ENCODE measurements at regions of chr20 and their contacts with region 1.

Region 1: DNA sequence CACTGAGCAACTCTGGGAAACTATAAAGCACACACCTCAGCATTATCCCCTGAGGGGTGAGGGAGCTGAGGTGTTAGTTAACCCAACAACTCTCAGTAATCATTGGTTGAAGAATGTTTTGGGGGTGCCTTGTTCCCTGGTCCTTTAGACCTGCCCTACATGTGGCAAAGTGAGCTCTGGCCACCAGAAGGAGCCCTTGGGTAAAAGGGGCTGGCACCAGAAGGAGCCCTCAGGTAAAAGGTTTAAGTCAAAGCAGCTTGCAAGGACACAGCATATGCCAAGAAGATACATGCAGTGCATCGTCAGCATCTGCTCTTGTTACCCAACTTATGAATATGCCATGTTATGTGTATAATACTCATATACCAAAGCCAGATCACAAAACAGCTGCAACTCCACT is 1081.7 kb downstream of the KIF16B start:
- DNase-seq: peak; percentile 13
- ATAC-seq: no peak
- H3K4me3 ChIP-seq: no peak overlapping the region
- H3K4me3 Mint-ChIP-seq: no peak overlapping the region
- H3K27ac ChIP-seq: no peak overlapping the region
- H3K27ac Mint-ChIP-seq: no peak overlapping the region
- H3K4me1 ChIP-seq: no peaks in the 10 kb centered on the region
- H3K4me1 Mint-ChIP-seq: no peaks in the 10 kb centered on the region
- H3K27me3 ChIP-seq: no peaks in the 10 kb centered on the region
- H3K27me3 Mint-ChIP-seq: no peaks in the 10 kb centered on the region
- CTCF ChIP-seq: peak; percentile 13

Region 2: GRCh38 chr20:15930311-15931305 is 439.0 kb after region 1 on chr20:
- CTCF ChIA-PET with region 1: no interaction called
- POLR2A ChIA-PET with region 1: no interaction called
- intact Hi-C with region 1: loop called (anchors 10 kb)
- DNase-seq: peak; percentile 44
- ATAC-seq: peak; percentile 61
- H3K4me3 ChIP-seq: no peak overlapping the region
- H3K4me3 Mint-ChIP-seq: no peak overlapping the region
- H3K27ac ChIP-seq: no peak overlapping the region
- H3K27ac Mint-ChIP-seq: peak overlapping the region; percentile 39
- H3K4me1 ChIP-seq: peaks cover 12 to 15% of the 10 kb centered on the region in 2 donors
- H3K4me1 Mint-ChIP-seq: peaks cover 26% of the 10 kb centered on the region
- H3K27me3 ChIP-seq: no peaks in the 10 kb centered on the region
- H3K27me3 Mint-ChIP-seq: no peaks in the 10 kb centered on the region
- CTCF ChIP-seq: peak; percentile 64